Naive thymus-derived CD4-positive, alpha-beta T cell (primary cell): ENCODE measurements at regions of chr17 and their contacts with region 1.

Region 1: DNA sequence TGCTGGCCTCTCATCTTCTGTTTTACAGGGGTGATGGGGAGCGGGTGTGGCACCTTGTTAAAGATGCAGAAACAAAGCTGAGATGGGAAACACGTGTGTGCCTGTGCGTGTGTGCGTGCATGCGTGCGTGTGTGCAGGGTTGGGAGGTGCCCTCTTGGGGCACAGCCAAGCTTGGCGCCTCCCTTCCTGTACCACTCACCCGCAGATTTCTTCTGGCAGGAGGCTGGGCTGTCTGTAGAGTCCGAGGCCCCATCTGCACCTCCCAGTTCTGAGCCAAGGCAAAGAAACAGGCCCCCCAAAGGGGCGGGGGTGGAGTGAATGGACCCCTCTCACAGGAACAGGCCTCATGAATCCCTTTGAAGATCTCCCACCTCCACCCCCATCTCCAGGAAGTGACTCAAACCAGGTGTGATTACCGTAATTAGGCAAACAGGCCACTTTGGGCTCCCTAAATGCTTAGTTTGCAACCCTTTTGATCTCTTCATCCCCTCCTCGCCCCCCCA is 20.9 kb downstream of the TNS4 start:
- DNase-seq: peak; percentile 59 to 96 (median 92)
- ATAC-seq: peak; percentile 94
- H3K4me3 ChIP-seq: peak overlapping the region; percentile 5
- H3K4me3 Mint-ChIP-seq: peak overlapping the region; percentile 64 to 83 (median 73)
- H3K27ac ChIP-seq: peak overlapping the region; percentile 76
- H3K27ac Mint-ChIP-seq: peak overlapping the region; percentile 93 to 100 (median 98)
- H3K4me1 ChIP-seq: peaks cover 24 to 48% of the 10 kb centered on the region in 2 donors
- H3K4me1 Mint-ChIP-seq: peaks cover 31 to 84% (median 64%) of the 10 kb centered on the region in 7 donors
- H3K27me3 ChIP-seq: no peaks in the 10 kb centered on the region
- H3K27me3 Mint-ChIP-seq: no peaks in the 10 kb centered on the region

Region 2: GRCh38 chr17:40362696-40363110 is 117.8 kb before region 1 on chr17:
- CTCF ChIA-PET with region 1: interaction called, 4 read pairs
- POLR2A ChIA-PET with region 1: no interaction called
- intact Hi-C with region 1: loop called in 1 of 2 experiments (anchors 1 kb)
- DNase-seq: peak; percentile 60 to 90 (median 74)
- ATAC-seq: peak; percentile 88
- H3K4me3 ChIP-seq: peak overlapping the region; percentile 35
- H3K4me3 Mint-ChIP-seq: peak overlapping the region; percentile 10 to 87 (median 70)
- H3K27ac ChIP-seq: no peak overlapping the region
- H3K27ac Mint-ChIP-seq: peak overlapping the region in 1 of 9 donors; percentile 85
- H3K4me1 ChIP-seq: peaks cover 4 to 7% of the 10 kb centered on the region in 2 donors
- H3K4me1 Mint-ChIP-seq: peaks cover 4 to 37% (median 12%) of the 10 kb centered on the region in 7 donors
- H3K27me3 ChIP-seq: no peaks in the 10 kb centered on the region
- H3K27me3 Mint-ChIP-seq: peaks cover 0 to 23% (median 8%) of the 10 kb centered on the region in 5 donors

Region 3: DNA sequence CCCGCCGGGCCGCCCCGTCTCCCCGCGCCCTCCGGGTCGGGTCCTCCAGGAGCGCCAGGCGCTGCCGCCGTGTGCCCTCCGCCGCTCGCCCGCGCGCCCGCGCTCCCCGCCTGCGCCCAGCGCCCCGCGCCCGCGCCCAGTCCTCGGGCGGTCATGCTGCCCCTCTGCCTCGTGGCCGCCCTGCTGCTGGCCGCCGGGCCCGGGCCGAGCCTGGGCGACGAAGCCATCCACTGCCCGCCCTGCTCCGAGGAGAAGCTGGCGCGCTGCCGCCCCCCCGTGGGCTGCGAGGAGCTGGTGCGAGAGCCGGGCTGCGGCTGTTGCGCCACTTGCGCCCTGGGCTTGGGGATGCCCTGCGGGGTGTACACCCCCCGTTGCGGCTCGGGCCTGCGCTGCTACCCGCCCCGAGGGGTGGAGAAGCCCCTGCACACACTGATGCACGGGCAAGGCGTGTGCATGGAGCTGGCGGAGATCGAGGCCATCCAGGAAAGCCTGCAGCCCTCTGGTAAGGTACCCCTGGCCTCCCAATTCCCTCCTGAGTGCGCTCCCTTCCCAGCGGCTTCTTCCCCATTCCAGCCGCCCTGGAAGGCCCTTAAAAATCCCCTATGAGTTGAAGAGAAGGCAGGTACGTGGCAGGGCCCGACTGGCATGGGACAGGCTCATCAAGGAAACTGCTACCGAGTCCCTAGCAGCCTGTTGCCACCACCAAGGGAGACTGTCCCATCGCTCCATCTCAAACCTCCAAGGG is 36.8 kb before region 1 on chr17:
- CTCF ChIA-PET with region 1: interaction called, 6 read pairs
- POLR2A ChIA-PET with region 1: interaction called, 6 read pairs
- intact Hi-C with region 1: loop called (anchors 5 kb)
- DNase-seq: peak; percentile 40 to 80 (median 61)
- ATAC-seq: peak; percentile 87
- H3K4me3 ChIP-seq: peak overlapping the region; percentile 21
- H3K4me3 Mint-ChIP-seq: peak overlapping the region; percentile 65 to 90 (median 84)
- H3K27ac ChIP-seq: peak overlapping the region; percentile 1
- H3K27ac Mint-ChIP-seq: peak overlapping the region in 8 of 9 donors; percentile 60 to 93 (median 78)
- H3K4me1 ChIP-seq: peaks cover 25 to 27% of the 10 kb centered on the region in 2 donors
- H3K4me1 Mint-ChIP-seq: peaks cover 30 to 58% (median 33%) of the 10 kb centered on the region in 7 donors
- H3K27me3 ChIP-seq: no peaks in the 10 kb centered on the region
- H3K27me3 Mint-ChIP-seq: peaks cover 0 to 5% (median 0%) of the 10 kb centered on the region in 5 donors

Region 4: GRCh38 chr17:40497690-40498089 is 17.1 kb after region 1 on chr17:
- CTCF ChIA-PET with region 1: interaction called, 3 read pairs
- POLR2A ChIA-PET with region 1: interaction called, 16 read pairs
- intact Hi-C with region 1: no loop called
- DNase-seq: no peak
- ATAC-seq: no peak
- H3K4me3 ChIP-seq: no peak overlapping the region
- H3K4me3 Mint-ChIP-seq: no peak overlapping the region
- H3K27ac ChIP-seq: no peak overlapping the region
- H3K27ac Mint-ChIP-seq: peak overlapping the region in 1 of 9 donors; percentile 36
- H3K4me1 ChIP-seq: no peaks in the 10 kb centered on the region
- H3K4me1 Mint-ChIP-seq: peaks cover 0 to 21% (median 3%) of the 10 kb centered on the region in 7 donors
- H3K27me3 ChIP-seq: no peaks in the 10 kb centered on the region
- H3K27me3 Mint-ChIP-seq: peaks cover 0 to 11% (median 0%) of the 10 kb centered on the region in 5 donors

Region 5: DNA sequence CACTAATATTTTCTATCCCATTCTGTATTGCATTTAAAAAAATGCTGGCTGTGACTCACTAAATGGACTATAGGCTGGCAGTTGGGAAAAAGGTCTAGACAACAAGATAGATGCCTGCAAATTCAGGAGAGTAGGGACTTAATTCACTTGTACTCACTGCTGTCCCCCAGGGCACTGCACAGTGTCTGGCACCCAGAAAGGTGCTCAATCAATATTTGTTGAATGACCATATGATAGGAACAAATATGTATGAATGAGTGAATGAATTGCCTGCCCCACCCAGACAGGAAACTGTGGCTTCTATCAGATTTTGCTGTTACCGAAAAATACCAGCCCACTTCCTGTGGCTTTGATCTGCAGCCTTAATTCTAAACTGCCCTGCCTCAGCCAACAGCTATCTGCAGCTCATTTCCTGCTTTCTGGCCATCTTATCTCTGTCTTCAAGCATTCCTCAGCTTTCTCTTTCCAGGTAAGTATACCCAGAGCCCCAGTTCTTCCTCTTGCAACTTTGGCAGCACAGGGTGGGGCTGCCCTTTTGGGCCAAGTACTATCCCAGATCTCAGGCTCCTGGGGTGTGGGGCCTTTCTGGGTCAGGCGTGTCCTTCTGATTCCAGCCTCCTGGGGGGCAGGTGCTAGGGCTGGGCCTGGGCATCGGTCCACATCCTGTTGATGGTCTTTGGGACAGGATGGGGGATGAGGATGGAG is 36.2 kb after region 1 on chr17:
- CTCF ChIA-PET with region 1: interaction called, 5 read pairs
- POLR2A ChIA-PET with region 1: interaction called, 8 read pairs
- intact Hi-C with region 1: loop called (anchors 1 kb)
- DNase-seq: peak in 8 of 9 donors; percentile 69 to 88 (median 82)
- ATAC-seq: peak; percentile 85
- H3K4me3 ChIP-seq: peak overlapping the region; percentile 53
- H3K4me3 Mint-ChIP-seq: peak overlapping the region; percentile 60 to 89 (median 84)
- H3K27ac ChIP-seq: peak overlapping the region; percentile 10
- H3K27ac Mint-ChIP-seq: peak overlapping the region; percentile 21 to 97 (median 91)
- H3K4me1 ChIP-seq: peaks cover 47 to 55% of the 10 kb centered on the region in 2 donors
- H3K4me1 Mint-ChIP-seq: peaks cover 35 to 72% (median 67%) of the 10 kb centered on the region in 7 donors
- H3K27me3 ChIP-seq: no peaks in the 10 kb centered on the region
- H3K27me3 Mint-ChIP-seq: peaks cover 0 to 12% (median 0%) of the 10 kb centered on the region in 5 donors

Region 6: GRCh38 chr17:40536295-40537171 is 56.0 kb after region 1 on chr17:
- CTCF ChIA-PET with region 1: interaction called, 73 read pairs
- POLR2A ChIA-PET with region 1: interaction called, 39 read pairs
- intact Hi-C with region 1: loop called (anchors 1 kb)
- DNase-seq: peak in 1 of 9 donors; percentile 7
- ATAC-seq: no peak
- H3K4me3 ChIP-seq: no peak overlapping the region
- H3K4me3 Mint-ChIP-seq: peak overlapping the region in 6 of 10 donors; percentile 8 to 43 (median 23)
- H3K27ac ChIP-seq: no peak overlapping the region
- H3K27ac Mint-ChIP-seq: peak overlapping the region; percentile 77 to 99 (median 96)
- H3K4me1 ChIP-seq: peaks cover 68 to 81% of the 10 kb centered on the region in 2 donors
- H3K4me1 Mint-ChIP-seq: peaks cover 64 to 100% (median 94%) of the 10 kb centered on the region in 7 donors
- H3K27me3 ChIP-seq: no peaks in the 10 kb centered on the region
- H3K27me3 Mint-ChIP-seq: peaks cover 0 to 3% (median 0%) of the 10 kb centered on the region in 5 donors

Region 7: DNA sequence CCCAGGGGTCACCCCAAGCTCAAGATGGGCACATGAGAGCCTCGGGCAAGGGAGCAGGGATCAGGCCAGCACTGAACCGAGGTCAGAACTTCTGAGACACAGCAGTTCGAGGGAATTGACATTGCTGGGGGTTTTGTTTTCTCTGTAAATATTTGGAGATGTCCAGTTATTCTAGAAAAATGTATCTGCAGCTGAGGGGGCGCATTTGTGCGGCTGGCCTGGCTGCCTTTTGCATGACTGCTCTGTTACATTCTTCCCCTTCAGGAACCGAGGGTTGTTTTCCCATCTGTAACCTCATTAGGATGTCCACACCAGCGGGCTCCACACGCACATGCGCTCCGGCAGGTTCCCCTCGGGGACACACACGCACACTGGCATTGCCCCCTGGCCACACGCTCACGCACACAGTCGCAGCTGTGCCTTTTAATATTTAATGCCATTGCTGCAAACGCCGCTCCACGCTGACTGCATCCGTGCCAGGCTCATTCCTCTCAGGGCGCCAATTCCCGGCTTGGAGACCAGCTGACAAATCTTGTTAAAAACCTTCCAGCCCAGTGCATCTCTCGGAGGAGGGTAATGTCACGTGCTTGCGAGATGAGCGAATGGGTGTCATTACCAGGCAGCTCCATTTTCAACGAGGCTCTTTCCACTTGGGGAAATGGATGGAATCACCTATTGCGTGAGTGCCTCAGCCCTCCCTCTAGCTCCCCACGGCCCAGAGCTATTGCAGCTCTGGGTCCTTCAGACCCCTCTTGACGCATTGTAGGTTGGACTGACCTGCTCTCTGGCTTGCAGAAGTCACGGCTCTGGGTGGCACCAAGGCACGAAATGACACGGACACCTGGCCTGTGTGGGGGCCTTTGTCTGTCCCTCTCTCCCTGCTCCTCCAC is 71.6 kb after region 1 on chr17:
- CTCF ChIA-PET with region 1: interaction called, 4 read pairs
- POLR2A ChIA-PET with region 1: interaction called, 12 read pairs
- intact Hi-C with region 1: no loop called
- DNase-seq: peak in 2 of 9 donors; percentile 33 to 43
- ATAC-seq: peak; percentile 2
- H3K4me3 ChIP-seq: no peak overlapping the region
- H3K4me3 Mint-ChIP-seq: peak overlapping the region in 9 of 10 donors; percentile 4 to 100 (median 58)
- H3K27ac ChIP-seq: peak overlapping the region; percentile 79
- H3K27ac Mint-ChIP-seq: peak overlapping the region; percentile 76 to 100 (median 99)
- H3K4me1 ChIP-seq: peaks cover 52 to 93% of the 10 kb centered on the region in 2 donors
- H3K4me1 Mint-ChIP-seq: peaks cover 59 to 100% (median 98%) of the 10 kb centered on the region in 7 donors
- H3K27me3 ChIP-seq: no peaks in the 10 kb centered on the region
- H3K27me3 Mint-ChIP-seq: no peaks in the 10 kb centered on the region